Activated T-helper 2 cell treated with anti-CD3 and anti-CD28 coated beads, Interferon-gamma antibody, Interleukin-2, Interleukin-4, amounts not matched to agents 10 μg/mL and 5 μg/mL and 100 μg/mL, durations not matched to agents 14 hours and 24 hours and 36 hours (primary cell): ENCODE measurements at regions of chr4 and their contacts with region 1.

Region 1: GRCh38 chr4:37666625-37667071 is 19.5 kb downstream of the RELL1 start:
- DNase-seq: no peak
- H3K4me3 Mint-ChIP-seq: peak overlapping the region; percentile 19
- H3K27ac Mint-ChIP-seq: peak overlapping the region; percentile 61
- H3K4me1 Mint-ChIP-seq: peaks cover 44% of the 10 kb centered on the region
- H3K27me3 Mint-ChIP-seq: no peaks in the 10 kb centered on the region

Region 2: GRCh38 chr4:37715889-37716402 is 49.3 kb after region 1 on chr4:
- intact Hi-C with region 1: loop called (anchors 5 kb)
- DNase-seq: peak; percentile 11
- H3K4me3 Mint-ChIP-seq: no peak overlapping the region
- H3K27ac Mint-ChIP-seq: no peak overlapping the region
- H3K4me1 Mint-ChIP-seq: peaks cover 28% of the 10 kb centered on the region
- H3K27me3 Mint-ChIP-seq: peaks cover 37% of the 10 kb centered on the region